ENCODE measurements at regions of chr11 and their contacts with region 1.

Region 1: DNA sequence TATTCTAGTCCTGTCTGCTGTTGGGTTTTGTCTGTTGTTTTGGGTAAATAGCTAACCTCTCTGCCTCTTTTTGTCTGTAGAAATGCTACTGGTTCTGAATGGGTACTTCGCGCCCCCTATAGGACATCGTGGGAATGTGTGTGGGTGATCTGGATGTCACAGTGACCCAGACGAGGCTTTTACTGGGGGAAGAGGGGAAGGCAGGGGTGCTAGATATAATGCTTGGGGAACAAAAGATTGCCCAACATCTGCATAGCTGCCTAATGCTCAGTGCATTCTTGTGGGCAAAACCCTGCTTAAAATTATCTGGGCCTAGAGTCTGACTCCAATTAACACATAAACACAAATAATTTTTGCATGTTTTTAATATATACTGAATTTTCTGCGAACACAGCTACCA is 57.7 kb downstream of the BMAL1 start:
- DNase-seq: peak; percentile 73
- H3K4me3 Mint-ChIP-seq: no peak overlapping the region
- H3K27ac Mint-ChIP-seq: peak overlapping the region; percentile 4
- H3K4me1 Mint-ChIP-seq: peaks cover 48% of the 10 kb centered on the region
- H3K27me3 Mint-ChIP-seq: no peaks in the 10 kb centered on the region
- CTCF ChIP-seq: peak; percentile 76

Region 2: GRCh38 chr11:13216019-13216710 is 119.2 kb before region 1 on chr11:
- CTCF ChIA-PET with region 1: interaction called, 10 read pairs
- intact Hi-C with region 1: no loop called
- DNase-seq: peak; percentile 79
- H3K4me3 Mint-ChIP-seq: no peak overlapping the region
- H3K27ac Mint-ChIP-seq: no peak overlapping the region
- H3K4me1 Mint-ChIP-seq: peaks cover 8% of the 10 kb centered on the region
- H3K27me3 Mint-ChIP-seq: no peaks in the 10 kb centered on the region
- CTCF ChIP-seq: no peak

Region 3: GRCh38 chr11:13289081-13289480 is 46.2 kb before region 1 on chr11:
- CTCF ChIA-PET with region 1: no interaction called
- intact Hi-C with region 1: loop called (anchors 5 kb)
- DNase-seq: peak; percentile 25
- H3K4me3 Mint-ChIP-seq: no peak overlapping the region
- H3K27ac Mint-ChIP-seq: no peak overlapping the region
- H3K4me1 Mint-ChIP-seq: peaks cover 16% of the 10 kb centered on the region
- H3K27me3 Mint-ChIP-seq: no peaks in the 10 kb centered on the region
- CTCF ChIP-seq: no peak